IMR-90 (cell line): ENCODE measurements at regions of chr17 and their contacts with region 1.

Region 1: DNA sequence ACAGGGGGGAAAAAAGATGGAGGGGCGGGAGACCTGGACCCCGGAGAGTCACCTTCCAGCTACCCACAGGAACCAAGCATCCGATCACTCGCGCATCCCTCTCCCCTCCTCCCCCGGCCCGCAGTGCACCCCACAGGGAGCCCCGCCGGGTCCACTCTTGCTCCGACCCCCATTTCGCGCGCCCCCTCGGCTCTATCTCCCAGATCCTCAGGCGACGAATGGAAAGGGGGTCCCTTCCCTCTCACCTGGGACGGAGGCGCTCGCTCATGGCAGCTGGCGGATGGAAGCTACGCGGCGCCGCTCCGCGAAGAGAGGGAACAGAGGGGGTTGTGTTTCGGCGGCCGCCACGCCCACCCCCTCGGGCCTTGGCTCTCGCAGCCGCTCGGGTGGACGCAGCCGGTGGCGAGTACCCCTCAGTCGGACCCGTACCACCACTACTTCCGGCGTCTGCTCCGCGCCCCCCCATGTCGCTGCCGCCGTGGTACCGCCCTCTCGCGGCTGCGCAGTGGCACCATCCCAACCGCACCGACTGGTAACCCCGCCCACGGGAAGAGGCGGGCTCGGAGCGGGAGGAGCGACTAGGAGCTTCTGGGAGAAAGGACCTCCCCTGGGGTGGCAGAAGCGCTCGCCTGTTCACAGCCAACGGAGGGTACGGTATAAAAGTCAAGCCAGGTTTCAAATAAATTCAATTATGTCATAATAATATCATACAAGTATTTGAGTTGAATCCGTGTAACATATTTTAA is 29.7 kb downstream of the CPSF4L start:
- DNase-seq: peak; percentile 92
- ATAC-seq: peak; percentile 92
- H3K4me3 ChIP-seq: peak overlapping the region; percentile 82
- H3K27ac ChIP-seq: peak overlapping the region; percentile 77
- H3K4me1 ChIP-seq: peaks cover 12% of the 10 kb centered on the region
- H3K27me3 ChIP-seq: no peaks in the 10 kb centered on the region
- CTCF ChIP-seq: 0 out of 2 replicates have a peak, but pooled peaks have one; percentile 11
- POLR2A ChIP-seq: 0 out of 2 replicates have a peak, but pooled peaks have one; percentile 20
- RAD21 ChIP-seq: peak; percentile 17; the same call in 1 of the 2 replicates

Region 2: DNA sequence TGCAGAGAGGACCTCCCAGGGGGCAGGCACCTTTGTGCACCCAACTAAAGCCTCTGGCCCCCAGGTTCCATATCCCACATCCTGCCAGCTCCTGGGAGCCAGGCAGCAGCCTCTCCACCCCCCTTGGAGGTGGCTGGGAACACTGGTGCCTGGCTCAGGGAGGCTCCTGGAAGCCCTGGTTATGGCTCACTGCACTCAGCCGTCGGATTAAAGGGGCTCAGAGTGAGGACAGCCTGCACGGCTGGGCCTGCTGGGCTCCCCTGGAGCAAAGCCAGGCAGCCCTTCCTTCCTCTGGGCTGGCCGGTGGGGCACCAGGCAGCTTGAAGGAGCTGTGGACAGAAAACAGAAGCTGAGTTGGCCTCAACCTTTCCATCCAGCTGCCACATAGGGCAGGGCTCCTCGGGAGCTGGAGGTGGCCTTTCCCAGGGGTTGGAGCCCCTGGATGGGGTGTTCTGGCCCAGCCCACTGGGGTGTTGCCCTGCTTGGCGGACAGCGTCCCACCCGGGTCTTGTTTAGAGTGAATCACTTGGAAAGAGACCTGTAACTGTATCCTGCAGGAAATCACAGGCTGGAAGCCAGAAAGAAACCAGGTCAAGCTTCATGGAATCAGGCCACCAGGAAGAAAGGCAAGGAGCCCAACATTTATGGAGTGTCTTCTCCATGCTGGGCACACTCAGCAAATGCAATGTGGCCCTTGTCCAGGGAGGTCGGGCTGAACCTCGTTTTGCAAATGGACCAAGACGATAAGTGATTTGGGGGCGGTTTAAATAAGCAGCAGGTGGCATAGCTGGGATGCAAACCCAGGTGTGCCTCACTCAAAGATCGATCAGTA is 857.9 kb before region 1 on chr17:
- CTCF ChIA-PET with region 1: no interaction called
- POLR2A ChIA-PET with region 1: no interaction called
- dilution Hi-C with region 1: no loop called
- in situ Hi-C with region 1: no loop called
- intact Hi-C with region 1: no loop called
- DNase-seq: peak; percentile 63
- ATAC-seq: peak; percentile 32
- H3K4me3 ChIP-seq: no peak overlapping the region
- H3K27ac ChIP-seq: peak overlapping the region; percentile 8
- H3K4me1 ChIP-seq: peaks cover 29% of the 10 kb centered on the region
- H3K27me3 ChIP-seq: no peaks in the 10 kb centered on the region
- CTCF ChIP-seq: no peak
- POLR2A ChIP-seq: no peak
- RAD21 ChIP-seq: no peak

Region 3: DNA sequence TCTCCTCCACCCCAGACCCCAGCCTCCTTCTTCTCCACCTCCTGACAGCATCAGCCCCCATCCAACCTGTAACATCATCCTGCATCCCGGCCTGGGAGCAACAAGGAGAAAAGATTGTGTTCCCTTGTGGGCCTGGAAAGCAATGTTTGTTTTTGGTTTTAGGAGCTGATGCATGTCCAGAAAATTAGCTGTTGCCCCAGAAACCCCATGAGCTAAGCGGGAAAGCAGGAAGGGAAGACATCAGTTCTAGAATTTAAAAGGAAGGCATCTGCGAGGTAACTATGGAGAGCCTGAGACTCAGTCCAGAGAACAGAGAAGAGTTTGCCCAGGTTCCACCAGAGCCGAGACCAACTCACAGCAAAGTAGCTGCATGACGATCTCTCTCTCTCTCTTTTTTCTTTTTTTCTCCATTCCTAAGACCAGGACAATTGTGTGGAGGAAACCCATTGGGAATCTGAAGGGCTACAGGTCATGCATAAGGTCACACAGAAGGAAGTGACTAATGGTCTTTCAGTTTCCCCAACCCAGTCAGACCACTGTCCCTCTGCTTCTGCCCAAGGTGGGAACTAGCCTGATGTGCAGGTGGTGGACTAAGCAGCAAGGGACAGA is 263.9 kb before region 1 on chr17:
- CTCF ChIA-PET with region 1: no interaction called
- POLR2A ChIA-PET with region 1: no interaction called
- dilution Hi-C with region 1: no loop called
- in situ Hi-C with region 1: no loop called
- intact Hi-C with region 1: no loop called
- DNase-seq: peak; percentile 10
- ATAC-seq: no peak; the same call in 1 of the 2 replicates
- H3K4me3 ChIP-seq: no peak overlapping the region
- H3K27ac ChIP-seq: no peak overlapping the region
- H3K4me1 ChIP-seq: peaks cover 2% of the 10 kb centered on the region; the same call in 1 of the 2 replicates
- H3K27me3 ChIP-seq: no peaks in the 10 kb centered on the region
- CTCF ChIP-seq: no peak
- POLR2A ChIP-seq: no peak
- RAD21 ChIP-seq: no peak

Region 4: GRCh38 chr17:73192894-73193701 is 38.9 kb before region 1 on chr17 and contains the start of gene COG1:
- CTCF ChIA-PET with region 1: interaction called, 3 read pairs
- POLR2A ChIA-PET with region 1: interaction called, 4 read pairs
- dilution Hi-C with region 1: no loop called
- in situ Hi-C with region 1: no loop called
- intact Hi-C with region 1: loop called (anchors 2 kb)
- DNase-seq: peak; percentile 84
- ATAC-seq: peak; percentile 89
- H3K4me3 ChIP-seq: peak within 1 kb of the TSS; percentile 99
- H3K27ac ChIP-seq: peak within 1 kb of the TSS; percentile 93
- H3K4me1 ChIP-seq: peaks cover 5% of the 10 kb centered on the region
- H3K27me3 ChIP-seq: no peaks in the 10 kb centered on the region
- CTCF ChIP-seq: 0 out of 2 replicates have a peak, but pooled peaks have one; percentile 4
- POLR2A ChIP-seq: peak; percentile 88
- RAD21 ChIP-seq: no peak
- total RNA-seq, gene COG1: 14.4 and 18.3 TPM in 2 replicates